Posterior vena cava (tissue), 2 donors: ENCODE measurements at regions of chr9 and their contacts with region 1.

Region 1: DNA sequence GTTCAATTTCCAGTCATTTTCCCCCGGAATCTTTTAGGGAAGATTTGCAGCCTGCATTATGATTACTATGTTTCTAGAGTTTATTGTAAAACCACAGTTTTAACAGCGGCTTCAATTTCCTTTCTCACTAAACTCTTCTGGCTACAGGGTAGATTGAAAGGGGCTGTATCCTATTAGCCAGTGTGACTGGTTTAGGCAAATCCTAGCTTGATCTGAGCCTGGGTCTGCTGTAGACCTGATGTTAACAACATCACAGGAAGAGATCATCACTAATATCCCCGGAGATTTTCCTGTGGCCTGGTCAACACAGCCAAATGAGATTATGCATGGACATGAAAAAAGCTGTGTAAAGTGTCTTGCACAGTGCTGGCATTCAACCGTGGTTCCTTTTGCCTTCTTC is 33.4 kb downstream of the STOM start:
- DNase-seq: no peak

Region 2: GRCh38 chr9:121350993-121351561 is 14.4 kb after region 1 on chr9:
- intact Hi-C with region 1: loop called in 1 of 2 experiments (anchors 2 kb)
- DNase-seq: peak; percentile 90

Region 3: DNA sequence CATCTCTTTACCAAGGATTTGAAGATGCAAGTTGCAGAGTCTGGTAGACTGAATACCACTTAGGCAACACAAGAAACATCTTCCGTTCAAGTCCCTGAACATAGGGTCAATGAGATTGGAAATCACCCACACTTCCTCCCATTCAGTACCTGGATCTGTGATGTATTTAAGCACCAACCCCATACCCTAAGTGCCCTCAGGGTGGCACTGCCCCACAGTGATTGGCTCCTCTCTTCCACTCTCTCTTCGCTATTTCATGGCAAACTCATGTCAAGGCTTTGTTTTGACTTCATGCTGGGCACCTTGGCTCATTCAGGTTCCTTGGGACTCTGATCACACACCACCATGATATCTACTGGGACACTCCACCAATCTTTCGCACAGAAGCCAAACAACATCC is 109.3 kb after region 1 on chr9:
- intact Hi-C with region 1: no loop called
- DNase-seq: no peak